Activated CD4-positive, alpha-beta T cell treated with anti-CD3 and anti-CD28 coated beads, Interleukin-2, amount 10 ng/mL, durations not matched to agents 24 days and 14 days (primary cell): ENCODE measurements at regions of chr1 and their contacts with region 1.

Region 1: DNA sequence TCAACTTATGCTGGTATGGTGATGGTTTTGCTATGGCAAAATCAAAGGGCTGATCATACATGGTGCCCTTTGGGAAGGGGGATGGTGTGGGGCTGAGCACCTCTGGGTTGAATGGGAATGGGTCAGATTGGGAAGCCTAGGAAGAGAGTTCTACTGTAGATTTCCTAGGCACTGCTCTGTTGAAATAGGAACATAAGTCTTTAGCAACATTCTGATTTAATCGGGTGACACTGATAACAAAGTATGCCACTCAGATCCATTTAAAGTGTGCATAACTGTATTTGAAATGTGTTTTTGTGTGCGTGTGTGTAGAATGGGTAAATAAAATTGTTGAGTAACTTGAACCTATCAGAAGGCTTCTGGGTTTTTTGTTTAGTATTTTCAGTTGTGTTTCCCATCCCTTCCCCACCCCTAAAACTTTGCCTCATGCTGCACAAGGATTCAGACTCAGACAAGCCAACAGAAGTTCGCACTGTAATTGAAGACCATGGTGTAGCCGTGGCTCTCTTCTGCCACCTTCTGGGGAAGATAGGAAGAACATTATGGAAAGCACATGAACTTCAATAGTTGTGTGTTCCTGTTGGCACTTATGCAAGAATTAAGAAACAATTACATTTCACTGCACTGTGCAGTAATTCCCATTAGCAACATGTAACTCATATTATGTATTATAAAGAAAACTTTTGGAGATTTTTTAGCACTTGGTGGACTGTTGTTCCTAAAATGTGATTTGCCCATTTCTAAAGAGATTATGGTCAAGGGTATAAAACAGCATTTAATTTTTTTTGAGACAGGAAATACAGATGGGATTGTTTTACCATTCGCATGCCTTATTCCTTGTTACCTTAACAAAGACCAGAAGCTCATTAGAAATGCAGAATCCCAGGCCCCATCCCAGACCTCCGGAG is 10.9 kb upstream of the C4BPB start:
- DNase-seq: peak; percentile 92
- H3K4me3 Mint-ChIP-seq: no peak overlapping the region
- H3K27ac Mint-ChIP-seq: no peak overlapping the region
- H3K4me1 Mint-ChIP-seq: no peaks in the 10 kb centered on the region
- H3K27me3 Mint-ChIP-seq: peaks cover 35% of the 10 kb centered on the region

Region 2: DNA sequence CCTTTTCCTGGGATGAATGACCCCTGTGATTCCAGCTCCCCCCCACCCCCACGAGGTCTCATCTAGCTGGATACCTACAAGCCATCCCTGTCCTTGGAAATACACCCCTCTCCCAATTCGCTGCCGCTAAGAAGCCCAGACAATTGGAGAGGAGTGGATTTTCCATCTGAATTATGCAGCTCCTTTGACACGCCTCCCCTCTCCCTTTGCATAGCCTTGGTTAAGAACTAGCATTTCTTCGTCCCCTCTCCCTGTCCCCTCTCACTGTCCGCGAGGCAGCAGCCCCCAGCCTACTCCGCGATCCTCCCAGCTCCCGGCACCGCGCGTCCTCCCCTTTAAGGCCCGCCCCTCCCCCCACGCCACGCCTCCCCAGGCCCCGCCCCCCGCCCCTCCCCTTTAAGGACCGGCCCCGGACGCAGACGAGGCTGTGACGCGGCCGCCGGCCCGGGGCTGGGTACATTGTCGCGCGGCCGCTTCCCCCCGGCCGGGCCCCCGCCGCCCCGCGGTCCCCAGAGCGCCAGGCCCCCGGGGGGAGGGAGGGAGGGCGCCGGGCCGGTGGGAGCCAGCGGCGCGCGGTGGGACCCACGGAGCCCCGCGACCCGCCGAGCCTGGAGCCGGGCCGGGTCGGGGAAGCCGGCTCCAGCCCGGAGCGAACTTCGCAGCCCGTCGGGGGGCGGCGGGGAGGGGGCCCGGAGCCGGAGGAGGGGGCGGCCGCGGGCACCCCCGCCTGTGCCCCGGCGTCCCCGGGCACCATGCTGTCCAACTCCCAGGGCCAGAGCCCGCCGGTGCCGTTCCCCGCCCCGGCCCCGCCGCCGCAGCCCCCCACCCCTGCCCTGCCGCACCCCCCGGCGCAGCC is 393.0 kb before region 1 on chr1 and contains the start of gene MAPKAPK2:
- intact Hi-C with region 1: no loop called
- DNase-seq: peak; percentile 91
- H3K4me3 Mint-ChIP-seq: peak within 1 kb of the TSS; percentile 99
- H3K27ac Mint-ChIP-seq: peak within 1 kb of the TSS; percentile 95
- H3K4me1 Mint-ChIP-seq: peaks cover 53% of the 10 kb centered on the region
- H3K27me3 Mint-ChIP-seq: peaks cover 7% of the 10 kb centered on the region
- total RNA-seq, gene MAPKAPK2: 95.1 and 97.4 TPM in 2 replicates

Region 3: GRCh38 chr1:207004981-207005830 is 72.5 kb before region 1 on chr1:
- intact Hi-C with region 1: loop called (anchors 5 kb)
- DNase-seq: peak; percentile 77
- H3K4me3 Mint-ChIP-seq: no peak overlapping the region
- H3K27ac Mint-ChIP-seq: no peak overlapping the region
- H3K4me1 Mint-ChIP-seq: no peaks in the 10 kb centered on the region
- H3K27me3 Mint-ChIP-seq: peaks cover 28% of the 10 kb centered on the region